ENCODE measurements at regions of chr3 and their contacts with region 1.

Region 1: DNA sequence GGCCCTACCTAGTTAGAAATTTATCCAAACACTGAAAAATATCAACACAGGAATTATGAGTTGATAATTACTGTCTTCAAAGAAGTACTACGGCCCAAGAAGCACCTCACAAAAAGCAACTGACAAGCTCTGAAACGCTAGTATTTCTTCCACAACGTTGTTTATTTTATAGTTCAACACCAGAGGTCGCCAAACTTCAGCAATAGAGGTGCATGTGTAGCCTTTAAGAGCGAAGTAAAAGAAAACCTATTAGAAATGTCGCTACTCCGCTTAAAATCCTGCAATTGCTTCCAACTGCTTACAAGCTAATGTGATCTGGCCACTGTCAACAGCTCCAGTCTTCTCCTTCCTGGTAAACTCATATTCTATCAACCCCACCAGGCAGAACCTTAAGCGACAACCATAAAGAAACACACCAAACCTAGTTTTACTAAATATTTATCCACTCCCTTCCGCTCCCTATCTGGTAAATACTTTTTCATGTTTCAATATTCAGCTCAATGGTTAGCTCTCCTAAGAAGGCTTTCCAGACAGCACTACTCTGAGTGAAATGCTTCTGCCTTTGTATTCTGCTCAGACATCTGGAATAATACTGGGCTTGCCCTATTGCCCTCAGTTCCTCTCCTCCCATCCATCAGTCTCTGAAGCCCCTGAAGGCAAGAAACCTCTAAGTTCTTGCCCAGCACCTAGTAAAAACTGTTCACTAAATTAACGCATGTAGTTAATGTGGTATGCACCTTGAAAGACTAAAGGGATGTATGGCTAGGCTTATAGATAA is 110.2 kb downstream of the NR1I2 start:
- DNase-seq: no peak
- H3K4me3 ChIP-seq: no peak overlapping the region
- H3K27ac ChIP-seq: no peak overlapping the region
- H3K4me1 ChIP-seq: no peaks in the 10 kb centered on the region
- H3K27me3 ChIP-seq: no peaks in the 10 kb centered on the region
- CTCF ChIP-seq: peak; percentile 65 to 81 (median 66)

Region 2: GRCh38 chr3:120182724-120183524 is 290.8 kb after region 1 on chr3:
- intact Hi-C with region 1: loop called (anchors 2 kb)
- DNase-seq: no peak
- H3K4me3 ChIP-seq: no peak overlapping the region
- H3K27ac ChIP-seq: no peak overlapping the region
- H3K4me1 ChIP-seq: peaks cover 0 to 1% of the 10 kb centered on the region in 2 donors
- H3K27me3 ChIP-seq: no peaks in the 10 kb centered on the region
- CTCF ChIP-seq: peak in 1 of 3 experiments; percentile 41

Region 3: DNA sequence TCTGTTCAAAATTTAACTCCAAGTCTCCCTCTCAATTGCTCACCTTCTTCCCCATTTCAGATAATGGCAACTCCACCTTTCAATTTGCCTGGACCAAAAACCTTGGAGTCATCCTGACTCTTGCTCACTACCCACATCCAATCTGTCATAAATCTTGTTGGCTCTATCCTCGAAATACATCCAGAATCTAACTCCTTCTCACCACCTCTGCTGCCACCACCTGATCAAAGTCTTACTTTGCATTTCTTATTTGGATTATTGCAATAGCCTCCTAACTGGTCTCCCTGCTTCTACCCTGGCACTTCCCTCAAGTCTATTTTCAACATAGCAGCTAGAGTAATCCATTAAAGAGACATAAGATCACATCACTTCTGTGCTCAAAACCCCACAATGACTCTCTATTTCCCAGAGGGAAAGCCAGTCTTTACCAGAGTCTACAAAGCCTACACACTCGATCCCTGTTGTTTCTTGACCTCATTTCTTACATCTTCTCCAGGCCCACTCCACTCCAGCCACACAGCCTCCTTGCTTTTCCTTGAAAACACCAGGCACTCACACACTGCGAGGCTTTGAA is 306.3 kb after region 1 on chr3:
- intact Hi-C with region 1: loop called (anchors 5 kb)
- DNase-seq: no peak
- H3K4me3 ChIP-seq: no peak overlapping the region
- H3K27ac ChIP-seq: no peak overlapping the region
- H3K4me1 ChIP-seq: peaks cover 0 to 5% of the 10 kb centered on the region in 2 donors
- H3K27me3 ChIP-seq: no peaks in the 10 kb centered on the region
- CTCF ChIP-seq: peak in 1 of 3 experiments; percentile 31